Spleen (tissue), 13 donors: ENCODE measurements at regions of chr1 and their contacts with region 1.

Region 1: DNA sequence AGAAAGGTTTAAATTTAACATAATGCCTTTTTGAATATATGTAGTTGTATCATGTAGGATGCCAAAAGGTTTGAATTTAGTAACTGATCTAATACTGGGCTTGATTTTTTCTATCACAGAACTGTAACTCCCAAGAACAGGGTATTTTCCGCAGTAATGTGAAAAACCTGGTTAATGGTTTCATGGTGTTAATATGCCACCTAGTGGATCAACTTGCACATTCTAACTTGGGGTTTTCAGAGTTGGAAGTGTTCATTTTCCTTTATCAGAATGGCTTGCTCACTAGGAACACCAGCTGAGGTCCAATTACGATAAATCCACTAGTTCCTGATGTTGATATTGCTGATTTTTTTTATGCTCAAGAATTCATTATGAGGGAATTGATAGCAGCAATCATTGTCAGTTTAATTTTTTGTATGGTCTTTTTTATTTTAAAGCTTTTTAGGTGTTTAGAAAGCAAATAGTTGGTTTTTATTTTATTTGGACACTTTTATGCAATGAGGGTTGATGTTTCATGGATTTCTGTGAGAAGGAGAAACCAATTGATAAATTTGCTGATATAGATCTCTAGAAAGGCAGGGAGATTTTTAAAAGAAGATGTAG is 157.2 kb downstream of the PLA2G4A start:
- DNase-seq: no peak
- H3K4me3 ChIP-seq: no peak overlapping the region
- H3K27ac ChIP-seq: no peak overlapping the region
- H3K4me1 ChIP-seq: peaks cover 0 to 6% (median 0%) of the 10 kb centered on the region in 6 donors
- H3K27me3 ChIP-seq: no peaks in the 10 kb centered on the region
- CTCF ChIP-seq: peak in 10 of 11 experiments; percentile 48 to 80 (median 66)
- POLR2A ChIP-seq: no peak

Region 2: DNA sequence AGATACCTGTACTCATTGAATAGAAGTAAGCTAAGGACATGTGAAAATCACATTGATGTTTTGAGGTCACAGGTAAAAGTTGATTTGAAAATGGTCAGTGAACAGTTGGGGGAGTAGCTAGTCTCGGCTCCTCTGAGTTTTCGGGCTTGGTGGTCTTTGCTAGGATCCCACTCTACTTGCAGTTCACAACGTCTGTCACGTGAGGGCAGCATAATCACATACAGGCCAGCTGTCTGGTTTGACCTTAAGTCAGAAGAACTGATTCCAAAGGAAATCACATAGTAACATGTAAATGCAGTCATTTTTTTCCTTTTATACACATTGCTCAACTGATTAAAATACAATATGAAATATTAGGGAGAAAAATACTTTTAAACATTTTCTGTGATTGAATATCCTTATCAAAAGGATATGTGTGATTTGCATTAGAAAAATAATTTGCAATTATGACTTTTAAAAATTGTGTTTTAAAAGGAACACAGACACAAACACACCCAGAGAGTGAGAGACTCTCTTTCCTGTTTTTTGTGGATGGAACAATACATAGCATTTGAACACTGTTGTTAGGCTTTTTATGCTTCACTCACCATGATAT is 503.2 kb before region 1 on chr1:
- intact Hi-C with region 1: loop called (anchors 5 kb)
- DNase-seq: no peak
- H3K4me3 ChIP-seq: no peak overlapping the region
- H3K27ac ChIP-seq: no peak overlapping the region
- H3K4me1 ChIP-seq: no peaks in the 10 kb centered on the region
- H3K27me3 ChIP-seq: no peaks in the 10 kb centered on the region
- CTCF ChIP-seq: peak; percentile 12 to 80 (median 66)
- POLR2A ChIP-seq: no peak

Region 3: GRCh38 chr1:186605762-186606350 is 380.1 kb before region 1 on chr1:
- intact Hi-C with region 1: loop called (anchors 5 kb)
- DNase-seq: no peak
- H3K4me3 ChIP-seq: no peak overlapping the region
- H3K27ac ChIP-seq: no peak overlapping the region
- H3K4me1 ChIP-seq: no peaks in the 10 kb centered on the region
- H3K27me3 ChIP-seq: no peaks in the 10 kb centered on the region
- CTCF ChIP-seq: peak in 9 of 11 experiments; percentile 15 to 63 (median 40)
- POLR2A ChIP-seq: no peak

Region 4: GRCh38 chr1:186948535-186948934 is 37.5 kb before region 1 on chr1:
- intact Hi-C with region 1: no loop called
- DNase-seq: no peak
- H3K4me3 ChIP-seq: no peak overlapping the region
- H3K27ac ChIP-seq: no peak overlapping the region
- H3K4me1 ChIP-seq: no peaks in the 10 kb centered on the region
- H3K27me3 ChIP-seq: no peaks in the 10 kb centered on the region
- CTCF ChIP-seq: no peak
- POLR2A ChIP-seq: no peak

Region 5: DNA sequence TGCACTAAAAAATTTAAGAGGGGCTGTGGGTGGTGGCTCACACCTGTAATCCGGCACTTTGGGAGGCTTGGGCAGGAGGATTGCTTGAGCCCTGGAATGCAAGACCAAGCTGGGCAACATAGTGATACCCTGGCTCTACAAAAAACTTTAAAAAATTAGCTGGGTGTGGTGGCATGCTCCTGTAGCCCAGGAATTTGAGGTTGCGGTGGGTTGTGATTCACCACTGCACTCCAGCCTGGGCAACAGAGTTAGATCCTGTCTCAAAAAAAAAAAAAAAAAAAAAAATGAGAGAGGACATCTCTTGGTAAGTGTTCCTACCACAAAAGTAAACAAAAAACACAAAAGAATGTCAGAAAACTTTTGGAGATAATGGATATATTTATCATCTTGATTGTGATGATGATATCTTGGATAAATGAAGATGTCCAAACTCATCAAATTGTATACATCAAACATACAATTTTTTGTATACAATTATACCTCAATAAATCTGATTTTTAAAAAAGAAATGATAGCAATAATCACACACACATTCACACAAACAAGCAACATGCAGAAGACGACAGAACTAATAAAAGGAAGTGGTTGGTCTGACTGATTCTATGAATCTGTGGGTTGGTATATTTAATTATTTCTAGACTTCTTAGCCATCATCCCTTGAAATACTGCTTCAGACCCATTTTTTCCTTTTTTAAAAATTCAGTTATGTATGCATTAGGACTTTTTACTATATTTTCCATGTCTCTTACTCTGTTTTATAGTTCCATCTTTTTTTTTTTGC is 308.6 kb after region 1 on chr1:
- intact Hi-C with region 1: no loop called
- DNase-seq: no peak
- H3K4me3 ChIP-seq: no peak overlapping the region
- H3K27ac ChIP-seq: no peak overlapping the region
- H3K4me1 ChIP-seq: no peaks in the 10 kb centered on the region
- H3K27me3 ChIP-seq: no peaks in the 10 kb centered on the region
- CTCF ChIP-seq: no peak
- POLR2A ChIP-seq: no peak